ENCODE measurements at regions of chr5 and their contacts with region 1.

Region 1: GRCh38 chr5:173530547-173530946 is 85.9 kb downstream of the BOD1 start:
- DNase-seq: no peak
- H3K4me3 ChIP-seq: no peak overlapping the region
- H3K27ac ChIP-seq: no peak overlapping the region
- H3K4me1 ChIP-seq: no peaks in the 10 kb centered on the region
- H3K27me3 ChIP-seq: no peaks in the 10 kb centered on the region
- CTCF ChIP-seq: no peak
- POLR2A ChIP-seq: no peak

Region 2: GRCh38 chr5:171580502-171581265 is 1949.9 kb before region 1 on chr5:
- intact Hi-C with region 1: loop called (anchors 10 kb)
- DNase-seq: no peak
- H3K4me3 ChIP-seq: no peak overlapping the region
- H3K27ac ChIP-seq: no peak overlapping the region
- H3K4me1 ChIP-seq: no peaks in the 10 kb centered on the region
- H3K27me3 ChIP-seq: no peaks in the 10 kb centered on the region
- CTCF ChIP-seq: no peak
- POLR2A ChIP-seq: no peak

Measured in breast epithelium (tissue), 4 donors.